AG04449 (cell line): ENCODE measurements at regions of chr3 and their contacts with region 1.

Region 1: DNA sequence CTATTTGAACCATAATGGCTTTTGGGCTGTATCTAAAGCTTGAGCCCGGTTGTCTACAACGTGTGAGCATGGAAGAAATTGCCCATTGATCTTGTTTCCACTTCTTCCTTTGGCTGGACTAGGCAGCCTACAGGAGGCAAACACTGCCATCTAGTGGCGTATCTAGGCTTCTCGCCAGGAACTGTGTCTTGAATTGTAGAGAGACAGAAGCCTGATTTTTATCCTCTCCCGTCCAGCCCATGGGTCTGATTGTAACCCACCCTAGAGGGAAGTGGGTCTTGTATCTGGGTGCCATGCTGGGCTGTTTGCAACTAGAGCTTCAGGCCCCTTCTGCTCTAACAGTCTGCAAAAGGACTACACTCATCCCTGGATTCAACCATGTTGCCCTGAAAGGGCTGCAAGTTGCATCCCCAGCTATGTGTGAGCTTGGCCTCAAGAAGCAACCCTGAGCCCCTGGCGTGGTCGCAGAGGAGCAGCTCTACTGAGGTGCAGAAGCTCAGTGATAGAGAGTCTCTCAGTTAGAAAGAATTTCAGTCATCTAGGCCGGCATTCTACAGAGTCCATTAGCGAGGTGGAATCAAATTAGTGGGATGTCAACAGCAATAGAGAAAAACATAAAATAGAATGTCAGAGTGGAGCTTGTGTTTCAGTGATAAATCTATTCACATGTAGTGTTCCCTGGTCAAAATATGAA is 170.2 kb upstream of the UMPS start:
- DNase-seq: peak; percentile 38
- H3K4me3 ChIP-seq: no peak overlapping the region
- CTCF ChIP-seq: peak; percentile 85

Region 2: DNA sequence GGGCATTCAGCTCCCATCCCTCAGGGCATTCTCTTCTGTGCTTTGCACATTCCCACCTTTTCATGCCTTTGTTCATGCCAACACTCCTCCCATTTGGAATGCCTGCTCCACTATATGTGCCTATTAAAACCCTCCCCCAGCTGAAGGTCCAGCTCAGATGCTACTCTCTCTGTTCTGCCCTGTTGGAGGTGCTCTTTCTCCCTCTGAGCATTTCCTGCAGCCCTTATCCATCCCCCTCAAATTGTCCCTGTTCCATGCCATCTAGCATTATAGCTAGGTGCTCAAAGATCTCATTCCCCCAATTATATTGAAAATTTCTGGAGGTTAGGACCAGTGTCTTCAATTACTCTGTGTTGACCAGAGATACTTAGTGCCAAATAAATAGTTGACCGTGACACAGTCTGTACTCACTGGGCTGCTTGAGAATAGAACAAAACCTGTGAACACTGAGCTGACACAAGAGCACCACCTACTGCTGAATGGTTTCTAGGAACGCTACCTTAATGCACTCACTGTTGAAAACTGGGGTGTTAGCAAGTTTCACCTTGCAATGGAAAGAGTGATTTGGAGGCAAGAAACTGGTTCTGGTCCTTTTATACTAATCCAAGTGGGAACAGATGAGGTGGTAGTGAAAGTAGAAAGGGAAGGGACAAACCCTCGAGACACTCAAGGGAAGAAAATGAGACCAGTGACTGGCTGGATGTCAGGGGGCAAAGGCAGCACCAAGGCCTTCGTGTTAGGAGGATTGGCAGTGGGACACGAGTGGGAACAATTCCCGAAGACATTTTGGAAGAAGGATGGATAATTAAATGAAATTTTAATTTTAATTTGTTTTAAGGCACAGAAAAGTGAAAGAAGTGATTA is 278.3 kb before region 1 on chr3:
- CTCF ChIA-PET with region 1: interaction called, 14 read pairs
- POLR2A ChIA-PET with region 1: no interaction called
- DNase-seq: no peak
- H3K4me3 ChIP-seq: no peak overlapping the region
- CTCF ChIP-seq: peak; percentile 58

Region 3: GRCh38 chr3:124420392-124420791 is 139.6 kb before region 1 on chr3:
- CTCF ChIA-PET with region 1: no interaction called
- POLR2A ChIA-PET with region 1: no interaction called
- DNase-seq: no peak
- H3K4me3 ChIP-seq: no peak overlapping the region
- CTCF ChIP-seq: no peak

Region 4: DNA sequence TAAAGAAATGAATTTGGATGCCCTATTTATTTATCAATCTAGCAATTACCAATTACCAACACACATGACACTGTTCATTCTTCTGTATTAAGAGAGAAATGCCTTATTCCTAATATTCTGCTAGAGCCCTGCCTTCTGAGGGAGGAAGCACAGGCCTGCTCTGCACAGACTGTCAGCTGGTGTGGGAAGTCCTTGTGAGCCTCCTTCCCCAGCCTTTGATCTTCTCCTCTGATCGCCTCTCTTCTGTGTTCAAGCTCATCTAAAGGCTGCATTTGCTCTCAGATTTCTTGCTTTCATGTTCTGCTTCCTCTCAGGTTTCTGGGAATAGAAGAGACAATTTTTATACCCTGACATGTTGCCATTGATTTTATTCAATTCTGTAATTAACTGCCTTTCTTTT is 120.4 kb before region 1 on chr3:
- CTCF ChIA-PET with region 1: no interaction called
- POLR2A ChIA-PET with region 1: no interaction called
- DNase-seq: no peak
- H3K4me3 ChIP-seq: no peak overlapping the region
- CTCF ChIP-seq: no peak

Region 5: GRCh38 chr3:124486324-124486723 is 73.7 kb before region 1 on chr3:
- CTCF ChIA-PET with region 1: interaction called, 23 read pairs
- POLR2A ChIA-PET with region 1: no interaction called
- DNase-seq: no peak
- H3K4me3 ChIP-seq: no peak overlapping the region
- CTCF ChIP-seq: no peak

Region 6: GRCh38 chr3:124532071-124532470 is 28.0 kb before region 1 on chr3:
- CTCF ChIA-PET with region 1: interaction called, 17 read pairs
- POLR2A ChIA-PET with region 1: no interaction called
- DNase-seq: no peak
- H3K4me3 ChIP-seq: no peak overlapping the region
- CTCF ChIP-seq: no peak

Region 7: GRCh38 chr3:124611520-124611919 is 51.5 kb after region 1 on chr3:
- CTCF ChIA-PET with region 1: interaction called, 10 read pairs
- POLR2A ChIA-PET with region 1: no interaction called
- DNase-seq: no peak
- H3K4me3 ChIP-seq: no peak overlapping the region
- CTCF ChIP-seq: no peak

Region 8: DNA sequence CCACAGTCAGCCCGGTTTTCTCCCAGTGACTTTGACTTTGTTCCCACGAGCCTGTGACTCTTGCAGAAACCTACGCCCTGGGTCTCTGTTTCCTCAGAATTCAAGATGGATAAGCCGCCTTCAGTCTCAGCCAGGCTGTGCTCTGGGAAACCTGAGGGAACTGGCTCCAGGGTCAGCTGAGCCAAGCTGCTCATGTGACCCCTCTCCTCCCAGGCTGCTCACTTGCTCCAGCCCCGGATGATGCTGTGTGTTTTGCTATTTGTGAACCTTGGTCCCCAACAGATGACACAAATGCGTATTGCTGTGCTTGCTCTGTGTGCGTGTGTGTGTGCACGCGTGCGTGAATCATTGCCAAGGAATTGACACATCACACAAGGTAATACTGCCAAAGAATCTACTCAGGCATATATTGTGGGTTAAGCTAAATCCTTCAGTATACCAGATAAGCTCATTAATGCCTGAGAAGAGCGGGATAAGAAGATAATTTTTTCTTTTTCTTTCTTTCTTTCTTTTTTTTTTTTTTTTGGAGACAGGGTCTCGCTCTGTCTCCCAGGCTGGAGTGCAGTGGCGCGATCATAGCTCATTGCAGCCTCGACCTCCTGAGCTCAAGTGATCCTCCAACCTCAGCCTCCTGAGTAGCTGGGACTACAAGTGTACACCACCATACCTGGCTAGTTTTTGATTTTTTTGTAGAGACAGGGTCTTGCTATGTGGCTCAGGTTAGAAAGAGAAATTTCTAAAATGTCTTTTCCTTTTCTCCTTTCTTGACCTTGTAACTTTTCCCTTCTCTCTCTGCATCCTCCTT is 141.1 kb after region 1 on chr3:
- CTCF ChIA-PET with region 1: interaction called, 215 read pairs
- POLR2A ChIA-PET with region 1: no interaction called
- DNase-seq: no peak
- H3K4me3 ChIP-seq: no peak overlapping the region
- CTCF ChIP-seq: no peak

Region 9: DNA sequence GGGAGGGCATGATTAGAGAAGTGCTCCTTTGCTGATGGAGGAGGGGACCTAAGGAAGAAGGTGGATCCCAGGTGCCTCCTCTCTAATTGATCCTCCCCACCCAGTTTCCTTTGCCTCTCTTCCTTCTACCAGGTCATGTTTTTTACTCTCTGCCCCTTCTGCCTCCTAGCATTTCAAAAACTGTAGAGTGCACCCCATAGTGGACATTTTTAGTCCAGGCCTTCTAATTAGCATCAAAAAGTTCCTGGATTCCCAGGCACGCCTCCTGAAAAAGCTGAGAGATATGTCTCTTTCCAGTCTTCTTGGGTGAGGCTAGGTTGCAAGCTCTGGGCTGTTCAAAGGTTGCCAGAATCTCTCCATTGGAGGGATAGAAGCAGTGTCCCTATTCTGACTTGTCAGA is 345.8 kb after region 1 on chr3:
- CTCF ChIA-PET with region 1: interaction called, 26 read pairs
- POLR2A ChIA-PET with region 1: no interaction called
- DNase-seq: no peak
- H3K4me3 ChIP-seq: no peak overlapping the region
- CTCF ChIP-seq: no peak